ENCODE measurements at regions of chr17 and their contacts with region 1.

Region 1: GRCh38 chr17:35764123-35764991 is 3.7 kb downstream of the C17orf50 start:
- DNase-seq: no peak
- H3K4me3 ChIP-seq: peak overlapping the region; percentile 46
- CTCF ChIP-seq: peak; percentile 98

Region 2: GRCh38 chr17:35605678-35606077 is 158.7 kb before region 1 on chr17:
- CTCF ChIA-PET with region 1: interaction called, 16 read pairs
- POLR2A ChIA-PET with region 1: no interaction called
- DNase-seq: peak; percentile 9
- H3K4me3 ChIP-seq: no peak overlapping the region
- CTCF ChIP-seq: no peak

Region 3: DNA sequence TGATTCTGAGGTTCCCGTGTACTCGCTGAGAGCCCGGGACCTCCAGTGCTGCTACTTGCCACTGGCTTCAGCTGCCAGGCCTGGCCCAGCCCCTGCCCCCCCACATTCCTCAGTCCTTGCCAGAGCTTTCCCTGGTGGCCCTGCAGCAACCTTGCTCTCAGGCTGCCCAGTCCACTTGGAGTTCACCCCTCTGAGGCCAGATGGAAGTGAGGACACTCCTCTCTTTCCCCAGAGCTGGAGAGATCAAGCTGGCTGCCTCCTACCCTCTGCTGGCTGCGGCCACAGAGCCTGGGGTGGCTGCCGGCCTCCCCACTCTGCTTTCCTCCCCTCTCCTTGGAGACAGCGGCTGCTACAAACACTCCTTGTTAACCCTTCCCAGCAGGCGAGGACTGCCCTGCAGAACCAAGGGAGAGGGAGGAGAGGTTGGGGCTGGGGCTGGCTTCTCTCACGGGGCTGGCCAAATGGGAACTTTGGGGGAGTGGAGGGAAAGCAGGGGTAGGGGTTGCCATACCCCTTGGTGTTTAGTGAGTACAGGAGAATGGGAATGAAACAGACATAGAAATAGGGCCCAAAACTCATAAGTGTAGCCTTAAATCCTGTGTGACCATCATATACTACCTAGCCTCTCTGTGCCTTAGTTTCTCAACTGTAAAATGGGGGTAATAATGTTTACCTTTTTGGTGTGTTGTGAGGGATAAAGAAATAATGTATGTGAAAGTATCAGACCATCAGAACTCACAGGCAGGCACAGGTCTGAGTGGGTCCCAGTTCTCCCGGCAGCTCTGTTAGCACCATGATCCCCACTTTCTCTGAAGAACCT is 11.2 kb before region 1 on chr17 and contains the start of gene GAS2L2:
- CTCF ChIA-PET with region 1: interaction called, 96 read pairs
- POLR2A ChIA-PET with region 1: no interaction called
- DNase-seq: no peak
- H3K4me3 ChIP-seq: no peak within 1 kb of the TSS
- CTCF ChIP-seq: no peak

Region 4: DNA sequence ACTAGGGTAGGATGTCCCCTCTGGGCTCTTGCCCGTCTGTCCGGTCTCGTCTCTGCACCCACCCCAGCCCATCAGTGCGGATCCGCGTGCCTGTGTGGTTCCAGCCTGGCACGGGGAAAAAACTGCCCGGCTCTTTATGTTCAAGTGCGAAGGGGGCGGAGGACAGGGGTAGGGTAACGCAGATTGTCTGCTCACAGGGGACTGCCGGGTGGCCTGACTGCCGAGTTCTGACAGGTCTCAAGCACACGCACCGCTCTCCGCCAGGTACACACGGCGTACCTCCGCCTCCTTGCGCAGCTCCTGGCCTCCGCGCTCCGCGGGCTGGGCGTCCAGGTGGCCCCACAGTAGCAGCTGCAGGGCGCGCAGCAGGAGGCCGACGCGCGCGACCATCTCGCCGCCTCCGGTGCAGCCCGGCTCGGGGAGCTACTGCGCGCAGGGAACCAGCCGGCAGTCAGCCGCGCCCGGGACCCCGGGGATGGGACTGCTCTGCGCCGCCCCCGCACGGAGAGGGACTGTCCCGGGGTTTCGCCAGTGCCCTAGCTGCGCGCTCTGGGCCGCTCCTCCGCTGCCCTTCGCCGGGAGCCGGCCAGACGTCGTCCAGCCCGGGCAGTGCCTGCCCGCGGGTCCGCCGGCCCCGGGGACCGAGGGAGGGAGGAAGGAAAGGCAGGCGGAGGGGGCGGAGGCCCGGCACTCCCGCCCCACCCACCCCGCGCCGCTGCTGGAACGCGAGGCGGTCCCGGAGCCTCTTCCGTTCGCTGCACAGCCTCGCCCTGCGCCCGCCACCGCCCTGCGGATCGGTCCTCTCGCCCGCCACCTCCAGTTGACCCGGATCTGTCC is 30.8 kb after region 1 on chr17 and contains the start of gene MMP28:
- CTCF ChIA-PET with region 1: interaction called, 321 read pairs
- POLR2A ChIA-PET with region 1: no interaction called
- DNase-seq: no peak
- H3K4me3 ChIP-seq: peak within 1 kb of the TSS; percentile 51
- CTCF ChIP-seq: no peak

Region 5: GRCh38 chr17:35819456-35819855 is 55.1 kb after region 1 on chr17:
- CTCF ChIA-PET with region 1: interaction called, 819 read pairs
- POLR2A ChIA-PET with region 1: no interaction called
- DNase-seq: no peak
- H3K4me3 ChIP-seq: no peak overlapping the region
- CTCF ChIP-seq: no peak

Region 6: GRCh38 chr17:35900708-35901480 is 136.5 kb after region 1 on chr17:
- CTCF ChIA-PET with region 1: no interaction called
- POLR2A ChIA-PET with region 1: no interaction called
- DNase-seq: no peak
- H3K4me3 ChIP-seq: no peak overlapping the region
- CTCF ChIP-seq: no peak